Dorsolateral prefrontal cortex (tissue), 120 donors: ENCODE measurements at regions of chr11 and their contacts with region 1.

Region 1: GRCh38 chr11:46537537-46538295 is 56.1 kb downstream of the AMBRA1 start:
- DNase-seq: peak in 8 of 10 donors; percentile 41 to 78 (median 58)
- H3K4me3 ChIP-seq: no peak overlapping the region
- H3K27ac ChIP-seq: peak overlapping the region in 16 of 59 donors; percentile 2 to 53 (median 24)
- H3K27me3 ChIP-seq: no peaks in the 10 kb centered on the region
- CTCF ChIP-seq: peak; percentile 72 to 94 (median 89)

Region 2: DNA sequence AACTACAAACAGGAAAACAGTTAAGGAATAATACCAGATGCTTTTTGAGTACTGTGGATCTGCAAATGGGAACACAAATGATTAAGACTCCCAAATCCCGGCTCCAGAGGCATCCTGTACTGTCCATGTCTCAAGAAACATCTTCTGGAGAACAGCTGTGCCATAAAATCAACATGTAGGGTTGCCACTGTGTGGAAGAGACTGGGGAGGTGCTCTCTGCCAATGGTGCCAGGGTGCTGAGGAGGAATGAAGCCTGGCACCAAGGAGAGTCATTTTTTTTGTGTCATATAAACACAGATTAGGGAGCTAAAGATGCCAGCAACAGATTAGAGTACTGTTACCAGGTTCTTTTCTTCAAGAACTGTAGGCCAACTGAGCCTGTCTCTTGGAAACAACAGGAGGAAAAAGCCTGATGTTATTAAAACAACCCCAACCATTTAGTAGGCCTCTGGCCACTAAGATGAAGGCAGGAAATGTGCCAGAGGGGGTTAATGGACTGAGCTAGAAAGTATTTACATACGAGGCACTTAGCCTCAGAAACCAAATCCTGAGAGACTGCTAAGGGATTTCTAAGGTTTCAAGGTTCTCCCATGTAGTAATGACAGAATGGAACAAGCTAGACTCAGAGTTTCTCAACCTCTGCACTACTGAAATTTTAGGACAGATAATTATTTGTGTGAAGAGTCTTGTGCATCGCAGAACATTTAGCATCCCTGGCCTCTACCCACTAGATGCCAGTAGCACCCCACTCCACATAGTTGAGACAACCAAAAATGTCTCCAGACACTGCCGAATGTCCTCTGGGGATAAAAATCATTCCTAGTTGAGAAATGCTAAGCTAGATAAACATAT is 91.6 kb before region 1 on chr11:
- intact Hi-C with region 1: loop called in 1 of 2 experiments (anchors 5 kb)
- DNase-seq: no peak
- H3K4me3 ChIP-seq: no peak overlapping the region
- H3K27ac ChIP-seq: peak overlapping the region in 34 of 59 donors; percentile 2 to 74 (median 28)
- H3K27me3 ChIP-seq: no peaks in the 10 kb centered on the region
- CTCF ChIP-seq: peak in 46 of 56 donors; percentile 11 to 65 (median 39)

Region 3: GRCh38 chr11:46493791-46494190 is 43.9 kb before region 1 on chr11:
- intact Hi-C with region 1: no loop called
- DNase-seq: no peak
- H3K4me3 ChIP-seq: no peak overlapping the region
- H3K27ac ChIP-seq: peak overlapping the region in 8 of 59 donors; percentile 1 to 79 (median 27)
- H3K27me3 ChIP-seq: no peaks in the 10 kb centered on the region
- CTCF ChIP-seq: no peak